ENCODE measurements at regions of chr3 and their contacts with region 1.

Region 1: DNA sequence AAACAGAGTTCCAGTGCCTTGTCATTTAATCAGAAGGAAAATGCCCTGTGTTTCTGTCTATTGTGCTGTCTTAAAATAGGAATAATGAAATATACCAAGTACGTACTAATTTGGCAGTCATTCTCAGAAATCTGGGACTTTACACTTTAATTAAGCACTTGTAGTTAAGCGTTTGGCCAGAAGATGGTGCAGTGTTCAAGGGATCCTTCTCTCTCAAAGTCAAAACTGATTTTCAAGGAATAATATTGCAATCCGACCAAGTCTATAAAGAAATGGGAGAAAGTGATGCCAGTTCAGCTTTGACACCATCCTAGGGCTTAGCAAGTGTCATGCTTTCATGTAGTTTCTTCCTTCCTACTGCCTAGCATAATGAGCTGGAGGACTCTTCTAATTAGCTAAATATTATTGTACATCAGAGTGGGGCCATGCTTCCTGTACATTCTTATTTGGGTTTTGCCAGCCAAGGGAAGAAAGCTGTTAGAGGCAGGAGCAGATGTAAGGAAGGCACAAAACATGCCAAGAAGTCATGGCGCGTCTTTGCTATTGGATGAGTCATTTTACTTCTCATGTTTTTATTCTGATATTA is 64.8 kb downstream of the SAMMSON start:
- DNase-seq: no peak
- H3K4me3 ChIP-seq: no peak overlapping the region
- H3K27ac ChIP-seq: no peak overlapping the region
- H3K4me1 ChIP-seq: no peaks in the 10 kb centered on the region
- H3K27me3 ChIP-seq: peaks cover 1% of the 10 kb centered on the region; the same call in 1 of the 2 replicates
- CTCF ChIP-seq: peak; percentile 65

Region 2: GRCh38 chr3:70358978-70359580 is 294.8 kb after region 1 on chr3:
- CTCF ChIA-PET with region 1: no interaction called
- POLR2A ChIA-PET with region 1: no interaction called
- intact Hi-C with region 1: loop called (anchors 5 kb)
- DNase-seq: peak in 1 of 2 experiments; percentile 0
- H3K4me3 ChIP-seq: no peak overlapping the region
- H3K27ac ChIP-seq: no peak overlapping the region
- H3K4me1 ChIP-seq: no peaks in the 10 kb centered on the region
- H3K27me3 ChIP-seq: no peaks in the 10 kb centered on the region
- CTCF ChIP-seq: peak; percentile 52